HEK293 (cell line): ENCODE measurements at regions of chr19 and their contacts with region 1.

Region 1: DNA sequence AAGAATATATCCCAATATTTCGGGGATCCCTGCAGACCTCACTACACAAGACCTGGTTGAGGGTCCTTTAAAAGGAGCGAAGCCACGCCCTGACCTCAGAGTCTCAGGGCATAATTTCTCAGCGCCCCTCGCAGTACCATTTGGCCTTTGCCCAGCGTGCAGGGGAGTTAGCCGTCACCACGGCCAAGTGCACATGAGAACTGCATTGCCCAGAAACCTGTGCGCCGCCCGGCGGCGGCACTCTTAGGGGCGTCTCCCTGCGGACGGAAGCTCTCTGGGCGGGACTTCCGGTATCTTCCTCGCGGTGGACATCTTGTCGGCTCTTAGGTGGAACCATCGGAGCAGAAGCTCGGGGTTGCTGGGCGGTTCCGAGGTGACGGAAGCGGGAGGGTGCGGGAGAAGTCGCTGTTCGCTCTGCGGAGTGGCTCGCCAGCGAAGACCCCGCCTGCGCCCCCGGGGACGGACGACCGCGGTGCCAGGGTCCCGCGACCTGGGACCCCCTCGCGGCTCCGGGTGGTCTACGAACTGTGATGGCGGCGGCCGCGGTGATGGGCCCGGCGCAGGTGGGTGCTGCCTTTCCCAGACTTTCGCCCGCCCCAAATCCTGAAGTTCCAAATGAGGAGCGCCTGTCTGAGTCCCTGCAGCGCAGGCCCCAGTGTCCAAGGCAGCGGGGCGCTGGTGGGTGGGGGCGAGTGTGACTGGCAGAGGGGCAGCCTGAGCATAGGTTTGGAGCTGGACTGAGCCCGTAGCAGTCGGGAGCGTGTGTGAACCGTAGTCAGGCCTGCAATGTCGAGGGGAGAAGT is at the start of gene ZNF134:
- H3K4me3 ChIP-seq: peak within 1 kb of the TSS; percentile 95
- H3K27ac ChIP-seq: peak within 1 kb of the TSS; percentile 71; the same call in 1 of the 2 replicates
- H3K4me1 ChIP-seq: no peaks in the 10 kb centered on the region
- CTCF ChIP-seq: no peak; the same call in 1 of the 2 replicates

Region 2: DNA sequence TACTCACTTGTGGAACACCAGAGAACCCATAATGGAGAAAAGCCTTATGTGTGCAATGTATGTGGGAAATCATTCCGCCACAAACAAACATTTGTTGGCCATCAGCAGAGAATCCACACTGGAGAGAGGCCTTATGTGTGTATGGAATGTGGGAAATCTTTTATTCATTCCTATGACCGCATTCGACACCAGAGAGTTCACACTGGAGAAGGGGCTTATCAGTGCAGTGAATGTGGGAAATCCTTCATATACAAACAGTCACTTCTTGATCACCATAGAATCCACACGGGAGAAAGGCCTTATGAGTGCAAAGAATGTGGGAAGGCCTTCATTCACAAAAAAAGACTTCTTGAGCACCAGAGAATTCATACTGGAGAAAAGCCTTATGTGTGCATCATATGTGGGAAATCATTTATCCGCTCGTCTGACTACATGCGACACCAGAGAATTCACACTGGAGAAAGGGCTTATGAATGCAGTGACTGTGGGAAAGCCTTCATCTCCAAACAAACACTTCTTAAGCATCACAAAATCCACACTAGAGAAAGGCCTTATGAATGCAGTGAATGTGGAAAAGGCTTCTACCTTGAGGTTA is 76.1 kb before region 1 on chr19:
- CTCF ChIA-PET with region 1: no interaction called
- POLR2A ChIA-PET with region 1: no interaction called
- H3K4me3 ChIP-seq: no peak overlapping the region
- H3K27ac ChIP-seq: no peak overlapping the region
- H3K4me1 ChIP-seq: no peaks in the 10 kb centered on the region
- CTCF ChIP-seq: no peak

Region 3: DNA sequence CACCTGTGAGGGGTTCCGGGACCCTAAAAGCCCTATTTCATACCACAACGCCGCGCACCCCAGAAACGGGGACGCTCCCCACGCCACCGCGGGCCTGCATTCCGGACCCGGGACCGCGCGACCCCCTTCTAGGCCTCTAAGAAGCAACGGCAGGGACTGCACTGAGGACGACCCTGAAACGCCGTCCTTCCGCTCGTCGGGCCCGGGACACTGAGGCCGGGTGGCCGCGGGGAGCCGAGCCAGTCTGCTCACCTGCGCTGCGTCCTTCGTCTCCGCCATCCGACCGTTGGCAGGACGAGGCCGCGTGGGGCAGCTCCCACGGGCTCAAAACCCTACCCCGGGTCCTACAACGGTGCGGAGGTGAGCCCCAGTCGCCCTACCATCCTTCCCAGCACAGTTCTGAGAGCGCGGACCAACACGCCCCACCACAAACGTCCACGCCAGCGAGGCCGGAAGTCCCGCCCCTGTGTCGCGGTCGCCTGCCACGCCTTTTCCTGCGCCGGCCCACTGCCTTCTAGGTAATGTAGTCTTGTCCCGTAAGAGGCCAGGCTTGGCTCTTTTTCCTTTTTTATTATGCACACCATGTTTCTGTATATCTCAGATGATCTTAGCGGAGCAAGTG is 54.6 kb before region 1 on chr19 and contains the start of gene ZNF550:
- CTCF ChIA-PET with region 1: no interaction called
- POLR2A ChIA-PET with region 1: no interaction called
- H3K4me3 ChIP-seq: peak within 1 kb of the TSS; percentile 69
- H3K27ac ChIP-seq: peak within 1 kb of the TSS; percentile 57; the same call in 1 of the 2 replicates
- H3K4me1 ChIP-seq: no peaks in the 10 kb centered on the region; the same call in 1 of the 2 replicates
- CTCF ChIP-seq: no peak

Region 4: DNA sequence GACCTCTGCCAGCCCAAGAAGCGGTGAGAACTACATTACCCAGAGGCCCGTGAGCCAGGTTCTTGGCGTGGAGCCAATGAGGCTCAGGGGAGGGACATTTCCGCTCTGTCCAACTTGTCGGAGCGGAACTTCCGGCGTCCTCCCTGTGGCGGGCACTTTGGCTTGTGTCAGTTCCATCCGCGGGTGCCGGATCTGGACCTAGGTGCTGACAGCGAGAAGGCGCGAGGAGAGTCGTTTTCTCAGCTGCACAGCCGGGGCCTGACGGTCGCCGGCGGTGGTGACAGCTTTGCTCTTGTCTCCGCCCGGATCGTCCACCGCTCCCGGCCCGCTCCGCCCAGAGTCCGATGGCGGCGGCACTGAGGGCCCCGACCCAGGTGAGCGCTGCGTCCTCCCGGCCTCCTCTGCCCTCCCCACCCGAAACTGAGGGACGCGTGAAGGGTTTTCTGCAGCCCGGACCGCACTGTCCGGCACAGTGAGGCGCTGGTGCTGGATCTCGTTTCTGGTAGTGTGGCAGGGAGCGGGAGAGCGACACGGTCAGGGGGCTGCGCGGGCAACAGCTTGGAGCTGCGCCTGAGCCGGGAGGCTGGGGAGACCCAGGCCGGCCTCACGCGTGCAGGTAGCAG is 14.3 kb before region 1 on chr19 and contains the start of gene ZNF530:
- CTCF ChIA-PET with region 1: no interaction called
- POLR2A ChIA-PET with region 1: interaction called, 15 read pairs
- H3K4me3 ChIP-seq: peak within 1 kb of the TSS; percentile 97
- H3K27ac ChIP-seq: peak within 1 kb of the TSS; percentile 55; the same call in 1 of the 2 replicates
- H3K4me1 ChIP-seq: 0 out of 2 replicates have a peak, but pooled peaks cover 2% of the 10 kb centered on the region
- CTCF ChIP-seq: no peak; the same call in none of the 2 replicates

Region 5: GRCh38 chr19:57627417-57627816 is 13.3 kb after region 1 on chr19:
- CTCF ChIA-PET with region 1: no interaction called
- POLR2A ChIA-PET with region 1: no interaction called
- H3K4me3 ChIP-seq: no peak overlapping the region
- H3K27ac ChIP-seq: no peak overlapping the region
- H3K4me1 ChIP-seq: no peaks in the 10 kb centered on the region
- CTCF ChIP-seq: no peak

Region 6: GRCh38 chr19:57706346-57706745 is 92.2 kb after region 1 on chr19:
- CTCF ChIA-PET with region 1: no interaction called
- POLR2A ChIA-PET with region 1: no interaction called
- H3K4me3 ChIP-seq: no peak overlapping the region
- H3K27ac ChIP-seq: no peak overlapping the region
- H3K4me1 ChIP-seq: no peaks in the 10 kb centered on the region
- CTCF ChIP-seq: no peak